A673 (cell line): ENCODE measurements at regions of chr11 and their contacts with region 1.

Region 1: GRCh38 chr11:67401495-67402191 is at the start of gene PPP1CA:
- DNase-seq: peak; percentile 95
- H3K4me3 ChIP-seq: peak within 1 kb of the TSS; percentile 87
- H3K27ac ChIP-seq: peak within 1 kb of the TSS; percentile 95
- H3K4me1 ChIP-seq: peaks cover 20% of the 10 kb centered on the region
- H3K27me3 ChIP-seq: no peaks in the 10 kb centered on the region
- CTCF ChIP-seq: no peak; the same call in 1 of the 2 replicates
- total RNA-seq, gene PPP1CA: 239 TPM in 2 replicates

Region 2: DNA sequence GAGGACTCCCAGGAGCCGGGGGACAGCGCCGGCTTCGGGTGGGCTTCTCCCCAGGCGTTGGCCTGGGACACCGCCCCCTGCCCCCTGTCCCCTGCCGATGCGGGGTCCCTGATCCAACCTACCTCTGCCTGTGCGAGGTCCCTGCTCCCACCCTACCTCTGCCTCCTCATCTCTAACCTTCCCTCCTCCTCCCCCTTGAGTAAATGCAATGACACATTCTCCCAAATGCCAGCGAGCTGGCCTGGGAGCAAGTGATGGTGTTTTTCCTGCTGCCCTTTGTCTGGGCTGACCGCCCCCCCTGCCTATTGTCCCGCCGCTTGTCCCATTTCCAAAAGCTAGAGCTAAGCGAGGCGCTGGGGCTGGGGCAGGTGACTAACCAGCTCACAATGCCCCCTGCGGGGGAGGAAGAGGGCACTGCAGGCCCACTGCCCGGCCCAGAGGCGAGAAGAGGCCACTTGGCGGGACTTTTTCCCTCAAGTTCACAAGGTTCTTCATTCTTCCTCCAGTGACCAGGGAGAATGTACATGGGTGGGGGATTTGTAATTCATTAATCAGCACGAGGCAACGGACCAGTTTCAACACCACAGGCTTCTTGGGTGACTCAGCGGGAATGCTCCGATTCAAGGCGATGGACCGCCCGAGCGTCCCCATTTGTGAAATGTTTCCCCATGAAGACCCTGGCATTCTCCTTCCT is 27.6 kb before region 1 on chr11:
- CTCF ChIA-PET with region 1: interaction called, 18 read pairs
- POLR2A ChIA-PET with region 1: no interaction called
- intact Hi-C with region 1: no loop called
- DNase-seq: peak; percentile 57
- H3K4me3 ChIP-seq: peak overlapping the region; percentile 74
- H3K27ac ChIP-seq: no peak overlapping the region
- H3K4me1 ChIP-seq: peaks cover 36% of the 10 kb centered on the region
- H3K27me3 ChIP-seq: no peaks in the 10 kb centered on the region
- CTCF ChIP-seq: peak; percentile 35; the same call in 1 of the 2 replicates

Region 3: GRCh38 chr11:68020575-68020974 is 618.9 kb after region 1 on chr11:
- CTCF ChIA-PET with region 1: no interaction called
- POLR2A ChIA-PET with region 1: no interaction called
- intact Hi-C with region 1: no loop called
- DNase-seq: no peak
- H3K4me3 ChIP-seq: no peak overlapping the region
- H3K27ac ChIP-seq: no peak overlapping the region
- H3K4me1 ChIP-seq: no peaks in the 10 kb centered on the region
- H3K27me3 ChIP-seq: no peaks in the 10 kb centered on the region
- CTCF ChIP-seq: peak; percentile 33; the same call in 1 of the 2 replicates